Endothelial cell of umbilical vein (primary cell): ENCODE measurements at regions of chr17 and their contacts with region 1.

Region 1: GRCh38 chr17:44141717-44142285 is at the start of gene HROB:
- DNase-seq: peak; percentile 94
- H3K4me3 ChIP-seq: peak within 1 kb of the TSS; percentile 81 to 98 (median 88)
- H3K27ac ChIP-seq: peak within 1 kb of the TSS; percentile 93
- H3K4me1 ChIP-seq: peaks cover 20% of the 10 kb centered on the region
- H3K27me3 ChIP-seq: no peaks in the 10 kb centered on the region
- CTCF ChIP-seq: peak; percentile 87 to 97
- POLR2A ChIP-seq: no peak
- total RNA-seq, gene HROB: 9.0 and 10.1 TPM in 2 replicates

Region 2: GRCh38 chr17:43467981-43468581 is 673.7 kb before region 1 on chr17:
- CTCF ChIA-PET with region 1: no interaction called
- POLR2A ChIA-PET with region 1: no interaction called
- dilution Hi-C with region 1: no loop called
- intact Hi-C with region 1: no loop called
- DNase-seq: no peak
- H3K4me3 ChIP-seq: no peak overlapping the region
- H3K27ac ChIP-seq: no peak overlapping the region
- H3K4me1 ChIP-seq: no peaks in the 10 kb centered on the region
- H3K27me3 ChIP-seq: peaks cover 0 to 4% of the 10 kb centered on the region in 2 experiments
- CTCF ChIP-seq: no peak
- POLR2A ChIP-seq: no peak

Region 3: DNA sequence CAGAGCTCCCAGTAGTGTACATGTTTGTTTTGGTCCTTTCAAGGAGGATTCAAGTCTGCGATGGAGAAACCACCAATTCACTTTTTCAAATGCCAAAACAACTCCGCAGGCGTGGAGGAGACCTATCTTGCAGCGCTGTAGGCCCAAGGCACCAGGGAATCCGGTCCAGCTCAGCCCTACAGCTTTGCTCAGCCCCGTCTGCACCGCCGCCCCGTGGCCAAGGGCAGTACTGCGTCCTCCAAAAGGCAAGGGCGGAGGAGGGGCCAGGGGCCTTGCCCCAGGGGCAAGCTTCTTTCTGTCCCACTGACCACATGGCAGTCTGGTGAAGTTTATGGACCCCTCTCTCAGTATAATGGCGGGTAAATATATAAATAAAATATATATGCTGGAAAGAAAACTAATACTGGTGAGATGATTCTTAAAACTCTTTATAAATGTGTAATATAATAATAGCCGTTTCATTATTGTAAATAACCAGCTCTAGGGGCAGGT is 295.5 kb before region 1 on chr17:
- CTCF ChIA-PET with region 1: no interaction called
- POLR2A ChIA-PET with region 1: no interaction called
- dilution Hi-C with region 1: no loop called
- intact Hi-C with region 1: no loop called
- DNase-seq: peak; percentile 74
- H3K4me3 ChIP-seq: no peak overlapping the region
- H3K27ac ChIP-seq: no peak overlapping the region
- H3K4me1 ChIP-seq: no peaks in the 10 kb centered on the region
- H3K27me3 ChIP-seq: peaks cover 2 to 3% of the 10 kb centered on the region in 2 experiments
- CTCF ChIP-seq: peak; percentile 95 to 99
- POLR2A ChIP-seq: no peak

Region 4: GRCh38 chr17:44079863-44080781 is 61.7 kb before region 1 on chr17:
- CTCF ChIA-PET with region 1: no interaction called
- POLR2A ChIA-PET with region 1: no interaction called
- dilution Hi-C with region 1: no loop called
- intact Hi-C with region 1: no loop called
- DNase-seq: no peak
- H3K4me3 ChIP-seq: no peak overlapping the region
- H3K27ac ChIP-seq: no peak overlapping the region
- H3K4me1 ChIP-seq: no peaks in the 10 kb centered on the region
- H3K27me3 ChIP-seq: no peaks in the 10 kb centered on the region
- CTCF ChIP-seq: no peak
- POLR2A ChIP-seq: no peak

Region 5: GRCh38 chr17:44095642-44096496 is 45.9 kb before region 1 on chr17:
- CTCF ChIA-PET with region 1: no interaction called
- POLR2A ChIA-PET with region 1: interaction called, 9 read pairs
- dilution Hi-C with region 1: no loop called
- intact Hi-C with region 1: loop called (anchors 1 kb)
- DNase-seq: peak; percentile 97
- H3K4me3 ChIP-seq: peak overlapping the region in 2 of 3 experiments; percentile 10 to 19
- H3K27ac ChIP-seq: peak overlapping the region; percentile 83
- H3K4me1 ChIP-seq: peaks cover 23% of the 10 kb centered on the region
- H3K27me3 ChIP-seq: no peaks in the 10 kb centered on the region
- CTCF ChIP-seq: no peak
- POLR2A ChIP-seq: peak; percentile 92

Region 6: GRCh38 chr17:44186307-44187130 is 44.7 kb after region 1 on chr17 and contains the start of gene TMUB2:
- CTCF ChIA-PET with region 1: interaction called, 5 read pairs
- POLR2A ChIA-PET with region 1: no interaction called
- dilution Hi-C with region 1: no loop called
- intact Hi-C with region 1: loop called (anchors 1 kb)
- DNase-seq: peak; percentile 100
- H3K4me3 ChIP-seq: peak within 1 kb of the TSS; percentile 82 to 96 (median 94)
- H3K27ac ChIP-seq: peak within 1 kb of the TSS; percentile 92
- H3K4me1 ChIP-seq: peaks cover 13% of the 10 kb centered on the region
- H3K27me3 ChIP-seq: no peaks in the 10 kb centered on the region
- CTCF ChIP-seq: no peak
- POLR2A ChIP-seq: peak; percentile 92
- total RNA-seq, gene TMUB2: 39.5 and 43.6 TPM in 2 replicates

Region 7: DNA sequence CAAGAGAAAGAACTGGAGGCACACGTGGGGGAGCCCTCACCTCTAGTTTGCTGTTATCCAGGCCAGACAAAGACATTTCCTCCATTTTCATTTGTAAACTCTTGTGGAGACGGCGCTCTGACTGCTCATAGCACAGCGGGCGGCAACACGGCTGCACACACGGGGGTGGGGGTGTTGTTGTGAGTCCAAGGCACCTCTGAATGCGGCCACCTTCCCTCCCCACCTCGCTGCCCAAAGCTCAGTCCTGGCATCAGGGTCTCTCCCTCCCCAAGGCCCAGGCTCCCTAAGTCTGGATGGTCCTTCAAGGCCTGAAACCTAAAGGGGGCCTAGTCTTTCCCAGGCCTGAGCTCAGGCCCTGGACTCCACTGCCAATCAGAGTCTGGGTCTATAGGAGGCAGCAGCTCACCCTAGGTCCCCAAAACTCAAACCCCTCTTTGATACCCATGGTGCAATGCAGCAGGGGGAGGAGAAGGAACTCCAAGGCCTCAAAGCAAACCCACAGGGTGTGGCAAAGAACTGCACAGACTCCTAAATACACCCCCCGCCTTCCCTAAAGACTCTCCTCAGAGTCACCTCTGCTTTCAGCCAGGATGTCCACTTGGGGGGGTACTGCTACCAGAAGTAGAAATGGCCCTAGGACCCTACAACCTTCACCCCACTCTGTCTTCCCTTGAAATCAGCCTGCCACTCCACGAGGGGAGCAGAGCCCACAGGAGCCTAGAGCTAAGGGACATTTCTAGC is 56.3 kb after region 1 on chr17:
- CTCF ChIA-PET with region 1: no interaction called
- POLR2A ChIA-PET with region 1: no interaction called
- dilution Hi-C with region 1: no loop called
- intact Hi-C with region 1: no loop called
- DNase-seq: peak; percentile 30
- H3K4me3 ChIP-seq: peak overlapping the region; percentile 68 to 94 (median 88)
- H3K27ac ChIP-seq: peak overlapping the region; percentile 67
- H3K4me1 ChIP-seq: peaks cover 18% of the 10 kb centered on the region
- H3K27me3 ChIP-seq: no peaks in the 10 kb centered on the region
- CTCF ChIP-seq: no peak
- POLR2A ChIP-seq: no peak